Natural killer cell (primary cell): ENCODE measurements at regions of chr1 and their contacts with region 1.

Region 1: GRCh38 chr1:180863158-180863775 is 49.4 kb upstream of the KIAA1614 start:
- DNase-seq: peak in 1 of 2 donors; percentile 72
- ATAC-seq: peak in 1 of 3 donors; percentile 41
- H3K4me3 ChIP-seq: no peak overlapping the region
- H3K4me3 Mint-ChIP-seq: no peak overlapping the region
- H3K27ac ChIP-seq: no peak overlapping the region
- H3K27ac Mint-ChIP-seq: no peak overlapping the region
- H3K4me1 ChIP-seq: no peaks in the 10 kb centered on the region
- H3K4me1 Mint-ChIP-seq: no peaks in the 10 kb centered on the region
- H3K27me3 ChIP-seq: no peaks in the 10 kb centered on the region
- H3K27me3 Mint-ChIP-seq: no peaks in the 10 kb centered on the region
- CTCF ChIP-seq: peak; percentile 92

Region 2: DNA sequence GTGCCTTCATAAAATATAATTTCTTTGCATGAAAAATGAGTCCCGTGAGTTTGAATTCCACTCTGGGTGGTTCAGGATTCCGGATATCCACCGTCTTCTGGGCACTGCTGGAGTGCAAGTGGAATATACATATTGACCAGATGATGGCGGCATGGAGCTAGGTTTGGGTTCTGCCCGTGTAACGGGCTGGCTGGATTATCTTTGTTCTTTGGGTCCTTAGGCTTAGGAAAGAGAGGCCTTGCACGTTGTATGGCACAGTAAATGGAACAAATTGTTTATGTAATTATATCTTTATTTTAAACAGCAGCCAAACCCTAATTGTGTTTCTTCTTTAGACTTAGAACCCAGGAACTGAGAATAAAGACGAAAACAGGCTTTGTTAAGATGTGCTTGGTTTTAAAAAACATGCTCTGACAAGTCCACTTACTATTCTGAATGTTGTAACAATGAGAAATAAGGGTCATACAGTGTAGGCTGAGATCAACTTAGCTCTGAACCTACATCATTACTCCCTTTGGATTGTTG is 347.3 kb before region 1 on chr1:
- intact Hi-C with region 1: loop called (anchors 5 kb)
- DNase-seq: peak; percentile 23 to 83
- ATAC-seq: peak; percentile 88 to 98 (median 91)
- H3K4me3 ChIP-seq: no peak overlapping the region
- H3K4me3 Mint-ChIP-seq: no peak overlapping the region
- H3K27ac ChIP-seq: no peak overlapping the region
- H3K27ac Mint-ChIP-seq: no peak overlapping the region
- H3K4me1 ChIP-seq: no peaks in the 10 kb centered on the region
- H3K4me1 Mint-ChIP-seq: no peaks in the 10 kb centered on the region
- H3K27me3 ChIP-seq: no peaks in the 10 kb centered on the region
- H3K27me3 Mint-ChIP-seq: peaks cover 14 to 19% of the 10 kb centered on the region in 2 donors
- CTCF ChIP-seq: peak; percentile 87

Region 3: DNA sequence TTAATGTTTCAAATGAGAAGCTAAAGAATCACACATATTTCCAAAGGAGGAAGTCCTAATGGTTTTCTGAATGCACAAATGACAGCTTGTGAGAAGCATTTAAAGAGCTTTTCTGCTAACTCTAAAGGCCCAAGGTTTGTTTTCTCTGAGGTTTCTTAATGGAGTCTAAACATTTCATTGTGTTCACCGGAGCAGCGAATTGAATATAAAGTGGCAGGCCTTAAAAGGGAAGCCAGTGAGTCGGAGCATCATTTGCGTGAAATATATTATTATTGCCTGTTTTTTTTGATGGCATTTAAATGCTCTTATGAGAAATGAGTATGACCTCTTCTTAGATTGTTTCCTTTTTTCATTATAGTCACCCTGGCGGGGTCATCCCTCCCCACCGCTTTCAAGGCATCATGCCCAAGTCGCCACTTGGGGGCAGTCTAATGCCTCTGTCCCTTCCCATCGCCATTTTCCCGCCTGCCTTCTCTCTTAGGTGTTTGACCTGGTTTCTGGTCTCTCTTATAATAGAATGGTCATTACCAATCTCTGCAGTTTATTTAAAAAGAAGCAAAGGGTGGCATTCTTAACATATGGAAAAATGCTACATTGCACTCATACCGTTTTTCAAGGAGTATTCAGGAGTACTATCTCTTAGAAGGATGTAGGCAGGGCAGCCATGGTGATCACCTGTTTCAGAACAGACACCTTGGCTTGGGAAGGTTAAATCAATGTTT is 329.8 kb before region 1 on chr1:
- intact Hi-C with region 1: loop called (anchors 5 kb)
- DNase-seq: peak in 1 of 2 donors; percentile 76
- ATAC-seq: peak in 2 of 3 donors; percentile 68 to 74
- H3K4me3 ChIP-seq: no peak overlapping the region
- H3K4me3 Mint-ChIP-seq: no peak overlapping the region
- H3K27ac ChIP-seq: no peak overlapping the region
- H3K27ac Mint-ChIP-seq: no peak overlapping the region
- H3K4me1 ChIP-seq: no peaks in the 10 kb centered on the region
- H3K4me1 Mint-ChIP-seq: no peaks in the 10 kb centered on the region
- H3K27me3 ChIP-seq: no peaks in the 10 kb centered on the region
- H3K27me3 Mint-ChIP-seq: peaks cover 9 to 50% of the 10 kb centered on the region in 2 donors
- CTCF ChIP-seq: peak; percentile 57

Region 4: DNA sequence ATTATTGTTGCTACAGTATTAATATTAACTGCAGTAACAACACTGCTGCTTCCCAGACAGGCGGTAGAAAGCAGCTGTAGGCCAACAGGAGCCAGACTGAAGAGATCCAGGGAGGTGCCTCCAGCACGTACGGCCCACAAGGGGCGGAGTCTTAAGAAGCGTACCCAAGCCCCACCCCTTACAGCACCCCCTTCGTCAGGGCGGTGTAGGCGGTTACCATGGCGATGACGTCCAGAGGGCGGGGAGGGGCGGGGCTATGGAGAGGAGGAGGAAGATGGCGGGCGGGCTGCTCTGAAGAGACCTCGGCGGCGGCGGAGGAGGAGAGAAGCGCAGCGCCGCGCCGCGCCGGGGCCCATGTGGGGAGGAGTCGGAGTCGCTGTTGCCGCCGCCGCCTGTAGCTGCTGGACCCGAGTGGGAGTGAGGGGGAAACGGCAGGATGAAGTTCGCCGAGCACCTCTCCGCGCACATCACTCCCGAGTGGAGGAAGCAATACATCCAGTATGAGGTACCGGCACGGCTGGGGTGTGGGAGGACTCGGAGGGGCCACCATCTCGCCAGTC is 231.4 kb before region 1 on chr1 and contains the start of gene XPR1:
- intact Hi-C with region 1: loop called (anchors 5 kb)
- DNase-seq: peak; percentile 88 to 100
- ATAC-seq: peak; percentile 95 to 100 (median 96)
- H3K4me3 ChIP-seq: peak within 1 kb of the TSS; percentile 95
- H3K4me3 Mint-ChIP-seq: no peak within 1 kb of the TSS
- H3K27ac ChIP-seq: peak within 1 kb of the TSS; percentile 92
- H3K27ac Mint-ChIP-seq: no peak within 1 kb of the TSS
- H3K4me1 ChIP-seq: peaks cover 3% of the 10 kb centered on the region
- H3K4me1 Mint-ChIP-seq: peaks cover 0 to 14% of the 10 kb centered on the region in 2 donors
- H3K27me3 ChIP-seq: no peaks in the 10 kb centered on the region
- H3K27me3 Mint-ChIP-seq: peaks cover 8 to 9% of the 10 kb centered on the region in 2 donors
- CTCF ChIP-seq: no peak
- total RNA-seq, gene XPR1: 14.8 to 18.2 (median 16.7) TPM